ENCODE measurements at regions of chr4 and their contacts with region 1.

Region 1: GRCh38 chr4:98928505-98929340 is at the start of gene EIF4E:
- DNase-seq: peak; percentile 84 to 99 (median 97)
- ATAC-seq: peak; percentile 85 to 88 (median 86)
- H3K4me3 ChIP-seq: peak within 1 kb of the TSS; percentile 92 to 96
- H3K4me3 Mint-ChIP-seq: peak within 1 kb of the TSS; percentile 94 to 99 (median 99)
- H3K27ac ChIP-seq: peak within 1 kb of the TSS; percentile 84
- H3K27ac Mint-ChIP-seq: peak within 1 kb of the TSS; percentile 92 to 97
- H3K4me1 ChIP-seq: peaks cover 11 to 20% of the 10 kb centered on the region in 2 experiments
- H3K4me1 Mint-ChIP-seq: peaks cover 27 to 50% (median 41%) of the 10 kb centered on the region in 3 donors
- H3K27me3 ChIP-seq: no peaks in the 10 kb centered on the region
- H3K27me3 Mint-ChIP-seq: no peaks in the 10 kb centered on the region
- total RNA-seq, gene EIF4E: 39.4 to 60.6 (median 56.4) TPM

Region 2: GRCh38 chr4:98873059-98873458 is 55.7 kb before region 1 on chr4:
- CTCF ChIA-PET with region 1: no interaction called
- POLR2A ChIA-PET with region 1: interaction called, 4 to 14 read pairs
- DNase-seq: no peak
- ATAC-seq: no peak
- H3K4me3 ChIP-seq: no peak overlapping the region
- H3K4me3 Mint-ChIP-seq: no peak overlapping the region
- H3K27ac ChIP-seq: no peak overlapping the region
- H3K27ac Mint-ChIP-seq: no peak overlapping the region
- H3K4me1 ChIP-seq: no peaks in the 10 kb centered on the region
- H3K4me1 Mint-ChIP-seq: peaks cover 0 to 5% (median 0%) of the 10 kb centered on the region in 3 donors
- H3K27me3 ChIP-seq: no peaks in the 10 kb centered on the region
- H3K27me3 Mint-ChIP-seq: no peaks in the 10 kb centered on the region

Region 3: DNA sequence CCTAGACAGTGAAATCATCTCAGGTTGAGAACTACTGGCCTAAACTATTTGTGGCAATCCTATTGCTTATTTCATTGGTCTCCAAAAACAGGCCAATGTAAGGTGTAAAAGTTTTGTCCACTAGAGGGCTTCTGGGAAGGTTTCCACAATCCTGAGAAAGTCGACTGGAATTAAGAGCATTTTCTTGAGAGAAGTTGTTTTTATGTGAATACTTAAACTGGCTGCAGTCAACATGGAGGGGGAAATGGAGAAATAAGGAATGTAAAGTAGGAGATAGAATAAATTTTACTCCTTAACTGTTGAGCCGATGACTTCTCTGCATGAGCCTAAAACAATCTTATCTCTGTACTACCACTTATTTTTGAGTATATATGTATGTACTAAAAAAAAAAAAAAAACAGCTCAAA is 11.2 kb after region 1 on chr4:
- CTCF ChIA-PET with region 1: interaction called, 3 to 4 read pairs
- POLR2A ChIA-PET with region 1: interaction called, 3 to 16 read pairs
- DNase-seq: peak in 1 of 35 experiments; percentile 52
- ATAC-seq: peak in 1 of 4 experiments; percentile 48
- H3K4me3 ChIP-seq: no peak overlapping the region
- H3K4me3 Mint-ChIP-seq: no peak overlapping the region
- H3K27ac ChIP-seq: no peak overlapping the region
- H3K27ac Mint-ChIP-seq: no peak overlapping the region
- H3K4me1 ChIP-seq: no peaks in the 10 kb centered on the region
- H3K4me1 Mint-ChIP-seq: peaks cover 9 to 14% (median 10%) of the 10 kb centered on the region in 3 donors
- H3K27me3 ChIP-seq: no peaks in the 10 kb centered on the region
- H3K27me3 Mint-ChIP-seq: no peaks in the 10 kb centered on the region

Region 4: DNA sequence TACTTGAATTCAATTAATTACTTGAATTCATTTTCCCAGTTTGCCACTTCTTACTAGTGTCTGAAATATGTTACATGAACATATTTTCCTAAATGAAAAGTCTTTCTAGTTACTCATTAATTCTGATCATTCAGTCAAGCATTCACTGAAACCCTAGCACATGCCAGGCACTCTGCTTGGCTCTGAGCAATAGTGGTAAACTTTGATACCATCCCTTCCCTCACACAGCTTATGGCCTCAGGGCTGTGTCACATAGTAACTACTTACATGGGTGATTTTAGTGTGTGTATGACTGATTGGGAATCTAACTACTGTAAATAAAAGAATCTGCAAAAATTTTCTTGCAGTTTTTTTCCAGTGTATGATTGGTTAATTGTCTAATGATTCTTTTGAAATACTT is 99.5 kb after region 1 on chr4:
- CTCF ChIA-PET with region 1: no interaction called
- POLR2A ChIA-PET with region 1: interaction called in 1 of 2 experiments, 15 read pairs
- DNase-seq: no peak
- ATAC-seq: no peak
- H3K4me3 ChIP-seq: no peak overlapping the region
- H3K4me3 Mint-ChIP-seq: no peak overlapping the region
- H3K27ac ChIP-seq: no peak overlapping the region
- H3K27ac Mint-ChIP-seq: no peak overlapping the region
- H3K4me1 ChIP-seq: peaks cover 0 to 4% of the 10 kb centered on the region in 2 experiments
- H3K4me1 Mint-ChIP-seq: peaks cover 73 to 88% (median 79%) of the 10 kb centered on the region in 3 donors
- H3K27me3 ChIP-seq: no peaks in the 10 kb centered on the region
- H3K27me3 Mint-ChIP-seq: no peaks in the 10 kb centered on the region

Region 5: GRCh38 chr4:99841129-99841528 is 912.4 kb after region 1 on chr4:
- CTCF ChIA-PET with region 1: no interaction called
- POLR2A ChIA-PET with region 1: interaction called in 1 of 2 experiments, 20 read pairs
- DNase-seq: no peak
- ATAC-seq: no peak
- H3K4me3 ChIP-seq: no peak overlapping the region
- H3K4me3 Mint-ChIP-seq: no peak overlapping the region
- H3K27ac ChIP-seq: no peak overlapping the region
- H3K27ac Mint-ChIP-seq: peak overlapping the region; percentile 8 to 56
- H3K4me1 ChIP-seq: peaks cover 9 to 12% of the 10 kb centered on the region in 2 experiments
- H3K4me1 Mint-ChIP-seq: peaks cover 16 to 30% (median 25%) of the 10 kb centered on the region in 3 donors
- H3K27me3 ChIP-seq: no peaks in the 10 kb centered on the region
- H3K27me3 Mint-ChIP-seq: no peaks in the 10 kb centered on the region

Region 6: GRCh38 chr4:100147198-100147597 is 1218.5 kb after region 1 on chr4:
- CTCF ChIA-PET with region 1: no interaction called
- POLR2A ChIA-PET with region 1: interaction called in 1 of 2 experiments, 10 read pairs
- DNase-seq: no peak
- ATAC-seq: no peak
- H3K4me3 ChIP-seq: no peak overlapping the region
- H3K4me3 Mint-ChIP-seq: no peak overlapping the region
- H3K27ac ChIP-seq: no peak overlapping the region
- H3K27ac Mint-ChIP-seq: no peak overlapping the region
- H3K4me1 ChIP-seq: no peaks in the 10 kb centered on the region
- H3K4me1 Mint-ChIP-seq: no peaks in the 10 kb centered on the region
- H3K27me3 ChIP-seq: peaks cover 0 to 3% of the 10 kb centered on the region in 2 experiments
- H3K27me3 Mint-ChIP-seq: peaks cover 0 to 3% of the 10 kb centered on the region in 2 donors

Region 7: DNA sequence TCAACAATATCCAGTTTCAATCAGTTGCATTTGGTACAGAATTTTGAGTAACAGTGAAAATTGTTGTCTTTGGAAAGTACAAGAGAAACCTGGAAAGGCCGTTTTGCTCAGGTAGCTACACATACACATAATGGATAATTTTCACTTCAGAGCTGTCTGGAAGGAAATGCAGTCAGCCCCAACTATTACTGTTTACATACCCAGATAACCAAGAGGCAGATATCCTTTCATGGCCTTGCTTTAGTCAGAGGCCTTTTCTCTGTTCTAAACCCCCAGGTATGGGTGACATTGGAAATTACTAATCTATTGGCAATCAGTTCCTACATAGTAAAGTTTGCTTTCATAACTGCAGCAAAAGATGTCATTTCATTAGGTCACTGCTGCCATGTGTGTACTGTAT is 1834.0 kb after region 1 on chr4:
- CTCF ChIA-PET with region 1: no interaction called
- POLR2A ChIA-PET with region 1: no interaction called
- DNase-seq: no peak
- ATAC-seq: no peak
- H3K4me3 ChIP-seq: no peak overlapping the region
- H3K4me3 Mint-ChIP-seq: no peak overlapping the region
- H3K27ac ChIP-seq: no peak overlapping the region
- H3K27ac Mint-ChIP-seq: no peak overlapping the region
- H3K4me1 ChIP-seq: no peaks in the 10 kb centered on the region
- H3K4me1 Mint-ChIP-seq: no peaks in the 10 kb centered on the region
- H3K27me3 ChIP-seq: no peaks in the 10 kb centered on the region
- H3K27me3 Mint-ChIP-seq: peaks cover 4 to 7% of the 10 kb centered on the region in 2 donors